BJ (cell line): ENCODE measurements at regions of chr13 and their contacts with region 1.

Region 1: GRCh38 chr13:36903925-36904595 is 16.0 kb downstream of the SMAD9 start:
- DNase-seq: no peak
- H3K4me3 ChIP-seq: no peak overlapping the region
- H3K27me3 ChIP-seq: no peaks in the 10 kb centered on the region
- CTCF ChIP-seq: no peak

Region 2: GRCh38 chr13:35649162-35649561 is 1254.9 kb before region 1 on chr13:
- CTCF ChIA-PET with region 1: no interaction called
- POLR2A ChIA-PET with region 1: interaction called, 12 read pairs
- DNase-seq: no peak
- H3K4me3 ChIP-seq: no peak overlapping the region
- H3K27me3 ChIP-seq: no peaks in the 10 kb centered on the region
- CTCF ChIP-seq: no peak

Region 3: GRCh38 chr13:36921631-36922301 is 17.7 kb after region 1 on chr13:
- CTCF ChIA-PET with region 1: no interaction called
- POLR2A ChIA-PET with region 1: no interaction called
- DNase-seq: no peak
- H3K4me3 ChIP-seq: no peak overlapping the region
- H3K27me3 ChIP-seq: no peaks in the 10 kb centered on the region
- CTCF ChIP-seq: no peak